ACHN (cell line): ENCODE measurements at regions of chr10 and their contacts with region 1.

Region 1: GRCh38 chr10:73879296-73880173 is 5.2 kb upstream of the CAMK2G start:
- DNase-seq: peak; percentile 86

Region 2: DNA sequence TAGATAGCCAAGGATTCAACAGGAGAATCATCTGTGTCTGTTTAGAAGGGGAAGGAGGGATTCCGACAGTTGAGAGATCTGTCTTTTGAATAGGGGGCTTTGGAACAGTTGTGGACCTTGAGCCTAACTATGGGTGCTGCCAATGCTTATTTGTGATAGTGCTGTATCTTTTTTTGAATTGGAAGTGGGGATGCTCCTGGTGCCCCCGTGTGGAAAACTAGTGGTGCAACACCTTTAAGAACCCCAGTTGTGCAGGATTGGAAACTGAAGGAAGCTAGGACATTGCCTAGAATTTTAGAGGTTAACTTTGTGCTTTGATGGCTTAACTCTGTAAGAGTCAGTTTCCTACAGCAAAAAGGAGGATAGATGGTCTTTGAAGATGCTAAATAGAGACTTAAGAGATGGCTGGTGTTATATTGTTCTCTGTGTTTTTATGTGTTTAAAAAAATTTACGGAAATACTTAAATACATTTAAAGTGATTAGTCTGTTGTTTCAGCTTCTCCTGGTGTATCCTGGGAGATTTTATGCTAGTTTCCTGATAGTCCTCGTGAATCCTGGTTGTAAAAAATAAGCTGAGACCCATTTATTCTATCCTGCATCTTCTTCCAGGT is 201.8 kb after region 1 on chr10:
- in situ Hi-C with region 1: loop called (anchors 25 kb)
- DNase-seq: peak; percentile 82

Region 3: DNA sequence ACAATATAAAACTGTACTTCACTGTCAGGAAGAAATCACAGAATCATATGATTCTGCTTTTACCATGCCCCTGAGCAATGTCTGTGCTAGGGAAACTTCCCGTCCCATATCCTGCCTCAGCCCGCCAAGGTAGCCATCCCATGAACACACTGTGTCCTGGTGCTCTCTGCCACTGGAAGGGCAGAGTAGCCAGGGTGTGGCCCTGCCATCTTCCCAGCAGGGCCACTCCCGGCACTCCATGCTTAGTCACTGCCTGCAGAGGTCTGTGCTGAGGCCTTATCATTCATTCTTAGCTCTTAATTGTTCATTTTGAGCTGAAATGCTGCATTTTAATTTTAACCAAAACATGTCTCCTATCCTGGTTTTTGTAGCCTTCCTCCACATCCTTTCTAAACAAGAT is 239.3 kb after region 1 on chr10:
- in situ Hi-C with region 1: no loop called
- DNase-seq: no peak